ENCODE measurements at regions of chr7 and their contacts with region 1.

Region 1: DNA sequence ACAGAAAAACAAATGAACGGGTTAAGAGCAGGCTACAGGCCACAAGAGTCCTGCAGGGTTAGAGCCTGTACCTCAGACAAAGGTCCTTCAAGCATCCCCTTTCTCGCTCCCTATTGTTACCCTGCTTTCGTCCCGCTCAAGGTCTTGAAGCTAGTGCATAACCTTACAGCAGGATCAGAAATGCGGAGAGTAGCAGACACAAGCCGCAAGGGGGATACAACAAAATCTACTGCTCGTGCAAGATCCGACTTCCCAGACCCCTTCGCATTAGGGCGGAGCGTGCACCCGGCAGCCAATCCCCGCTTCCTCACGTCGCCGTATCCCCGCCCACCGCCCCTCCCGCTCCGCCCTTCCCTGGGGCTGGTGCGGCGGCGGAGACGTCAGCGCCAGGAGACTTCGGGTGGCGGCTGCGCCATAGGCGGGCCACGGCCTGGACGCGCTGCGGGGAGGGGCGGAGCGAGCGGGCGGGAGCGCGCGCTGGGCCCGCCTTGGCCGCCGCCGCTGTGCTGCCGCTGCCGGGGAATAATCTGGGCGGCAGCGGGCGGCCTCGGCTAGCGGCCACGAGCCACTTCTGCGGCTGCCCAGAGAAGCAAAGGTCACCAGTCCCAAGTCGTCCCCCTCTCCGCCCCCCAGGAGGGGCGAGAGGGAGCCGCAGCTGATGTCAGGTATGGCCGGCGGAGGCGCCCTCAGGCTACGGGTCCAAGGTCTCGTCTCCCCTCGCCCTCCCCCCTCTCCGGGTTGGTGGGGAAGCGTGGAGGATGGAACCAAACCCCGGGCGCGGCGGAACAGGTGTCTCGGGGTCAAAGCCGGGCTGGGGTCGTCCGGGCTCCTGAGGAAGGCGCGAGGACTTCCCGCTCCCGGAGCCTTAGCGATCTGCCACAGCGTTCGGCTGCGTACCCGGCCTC is at the start of gene C1GALT1:
- DNase-seq: peak; percentile 97 to 100 (median 98)
- ATAC-seq: peak; percentile 84
- H3K4me3 ChIP-seq: peak within 1 kb of the TSS; percentile 95
- H3K4me3 Mint-ChIP-seq: peak within 1 kb of the TSS; percentile 94
- H3K27ac ChIP-seq: peak within 1 kb of the TSS; percentile 89 to 91
- H3K27ac Mint-ChIP-seq: no peak within 1 kb of the TSS
- H3K4me1 ChIP-seq: peaks cover 28% of the 10 kb centered on the region
- H3K4me1 Mint-ChIP-seq: peaks cover 8% of the 10 kb centered on the region
- H3K27me3 ChIP-seq: no peaks in the 10 kb centered on the region
- H3K27me3 Mint-ChIP-seq: no peaks in the 10 kb centered on the region
- CTCF ChIP-seq: peak; percentile 48
- total RNA-seq, gene C1GALT1: 49.4 to 51.9 TPM

Region 2: DNA sequence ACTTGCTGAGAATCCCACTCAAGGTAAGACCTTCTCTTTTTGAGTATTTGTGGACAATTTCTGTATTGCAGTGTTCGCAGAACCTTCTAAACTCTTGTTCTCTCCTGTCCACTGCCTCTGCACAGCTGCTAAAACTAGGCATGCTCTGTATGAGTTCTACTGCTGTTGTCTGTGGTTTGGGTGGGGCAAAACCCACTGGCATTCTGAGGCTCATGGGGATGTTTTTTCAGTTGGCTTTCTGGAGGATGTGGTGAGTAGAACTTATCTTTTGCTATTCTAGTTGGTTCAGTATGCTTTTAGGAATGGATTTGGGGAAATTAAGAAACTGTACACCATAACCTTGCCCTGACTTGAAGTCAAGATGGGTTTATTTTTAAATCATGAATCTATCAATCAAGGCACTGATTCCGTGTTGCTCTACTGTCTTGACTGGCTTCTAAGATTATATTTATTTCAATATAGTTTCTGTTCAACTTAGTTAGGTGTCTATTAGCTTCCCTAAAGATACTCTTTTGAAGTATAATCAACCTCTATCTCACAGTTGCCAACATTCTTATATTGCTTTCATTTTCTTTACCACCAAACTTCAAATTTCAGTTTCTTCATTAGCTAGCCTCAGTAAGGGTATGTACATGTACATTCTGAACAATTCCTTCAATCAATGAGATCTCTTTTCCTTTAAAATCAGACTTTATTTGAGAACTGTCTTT is 25.1 kb before region 1 on chr7:
- CTCF ChIA-PET with region 1: interaction called, 15 read pairs
- POLR2A ChIA-PET with region 1: interaction called, 119 read pairs
- intact Hi-C with region 1: loop called (anchors 1 to 5 kb)
- DNase-seq: peak; percentile 31 to 92 (median 54)
- ATAC-seq: peak; percentile 96
- H3K4me3 ChIP-seq: peak overlapping the region; percentile 35
- H3K4me3 Mint-ChIP-seq: peak overlapping the region; percentile 64
- H3K27ac ChIP-seq: peak overlapping the region; percentile 50 to 72
- H3K27ac Mint-ChIP-seq: peak overlapping the region; percentile 85
- H3K4me1 ChIP-seq: peaks cover 24% of the 10 kb centered on the region
- H3K4me1 Mint-ChIP-seq: peaks cover 71% of the 10 kb centered on the region
- H3K27me3 ChIP-seq: no peaks in the 10 kb centered on the region
- H3K27me3 Mint-ChIP-seq: no peaks in the 10 kb centered on the region
- CTCF ChIP-seq: no peak

Region 3: DNA sequence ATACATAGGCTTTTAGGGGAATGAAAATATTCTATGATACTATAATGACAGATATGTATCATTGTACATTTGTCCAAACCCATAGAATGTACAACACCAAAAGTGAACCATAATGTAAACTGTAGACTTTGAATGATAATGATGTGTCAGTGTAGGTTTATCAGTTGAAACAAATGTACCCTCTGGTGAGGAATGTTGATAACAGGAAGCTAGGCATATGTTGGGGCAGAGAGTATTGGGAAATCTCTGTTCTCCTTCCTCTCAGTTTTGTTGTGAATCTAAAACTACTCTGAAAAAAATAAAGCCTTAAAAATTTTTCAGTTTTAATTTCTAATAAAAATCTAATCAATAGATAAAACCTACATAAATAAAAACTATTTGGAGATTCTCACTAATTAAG is 36.8 kb after region 1 on chr7:
- CTCF ChIA-PET with region 1: no interaction called
- POLR2A ChIA-PET with region 1: interaction called, 5 read pairs
- intact Hi-C with region 1: loop called in 1 of 2 experiments (anchors 5 kb)
- DNase-seq: no peak
- ATAC-seq: no peak
- H3K4me3 ChIP-seq: no peak overlapping the region
- H3K4me3 Mint-ChIP-seq: no peak overlapping the region
- H3K27ac ChIP-seq: no peak overlapping the region
- H3K27ac Mint-ChIP-seq: no peak overlapping the region
- H3K4me1 ChIP-seq: no peaks in the 10 kb centered on the region
- H3K4me1 Mint-ChIP-seq: peaks cover 34% of the 10 kb centered on the region
- H3K27me3 ChIP-seq: no peaks in the 10 kb centered on the region
- H3K27me3 Mint-ChIP-seq: no peaks in the 10 kb centered on the region
- CTCF ChIP-seq: no peak

Region 4: DNA sequence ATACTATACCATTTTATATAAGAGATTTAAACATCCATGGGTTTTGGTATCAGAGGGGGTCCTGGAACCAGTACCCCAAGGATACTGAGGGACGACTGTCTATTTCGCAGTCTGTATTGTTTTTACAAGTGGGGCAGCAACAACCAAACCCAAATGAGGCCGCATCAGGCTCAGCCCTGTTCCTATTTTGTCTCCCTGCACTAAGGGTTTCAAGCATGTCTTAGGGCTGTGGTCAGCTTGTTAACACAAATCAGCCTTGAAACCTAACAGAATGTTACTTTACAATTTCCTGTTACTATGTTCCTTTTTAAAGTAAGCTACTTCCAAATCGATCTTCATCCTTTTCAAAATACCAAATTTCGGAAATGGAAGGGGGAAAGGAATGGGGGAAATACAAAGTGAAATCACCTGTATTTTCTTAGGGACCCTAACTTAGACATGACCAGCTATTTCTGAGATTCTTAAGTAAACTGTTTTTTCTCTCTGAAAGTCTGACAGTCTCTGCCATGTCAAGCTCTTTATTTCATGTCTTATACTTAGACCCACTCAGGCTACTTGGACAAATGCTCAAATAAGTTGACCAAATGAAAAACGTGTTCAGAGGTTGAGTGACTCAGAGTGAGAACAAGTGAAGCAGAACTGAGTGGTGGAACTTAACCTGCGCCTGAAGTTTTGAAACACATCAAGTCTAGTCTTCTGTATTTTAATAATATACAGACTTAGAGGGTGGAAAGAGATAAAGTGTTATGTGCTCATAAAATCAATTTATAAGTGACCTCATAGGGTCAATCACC is 75.7 kb after region 1 on chr7:
- CTCF ChIA-PET with region 1: interaction called, 5 read pairs
- POLR2A ChIA-PET with region 1: interaction called, 29 read pairs
- intact Hi-C with region 1: loop called in 1 of 2 experiments (anchors 2 kb)
- DNase-seq: peak in 3 of 14 experiments; percentile 41 to 50 (median 47)
- ATAC-seq: peak; percentile 42
- H3K4me3 ChIP-seq: peak overlapping the region; percentile 49
- H3K4me3 Mint-ChIP-seq: peak overlapping the region; percentile 78
- H3K27ac ChIP-seq: peak overlapping the region; percentile 24 to 78
- H3K27ac Mint-ChIP-seq: peak overlapping the region; percentile 76
- H3K4me1 ChIP-seq: peaks cover 18% of the 10 kb centered on the region
- H3K4me1 Mint-ChIP-seq: peaks cover 44% of the 10 kb centered on the region
- H3K27me3 ChIP-seq: no peaks in the 10 kb centered on the region
- H3K27me3 Mint-ChIP-seq: no peaks in the 10 kb centered on the region
- CTCF ChIP-seq: no peak

Region 5: DNA sequence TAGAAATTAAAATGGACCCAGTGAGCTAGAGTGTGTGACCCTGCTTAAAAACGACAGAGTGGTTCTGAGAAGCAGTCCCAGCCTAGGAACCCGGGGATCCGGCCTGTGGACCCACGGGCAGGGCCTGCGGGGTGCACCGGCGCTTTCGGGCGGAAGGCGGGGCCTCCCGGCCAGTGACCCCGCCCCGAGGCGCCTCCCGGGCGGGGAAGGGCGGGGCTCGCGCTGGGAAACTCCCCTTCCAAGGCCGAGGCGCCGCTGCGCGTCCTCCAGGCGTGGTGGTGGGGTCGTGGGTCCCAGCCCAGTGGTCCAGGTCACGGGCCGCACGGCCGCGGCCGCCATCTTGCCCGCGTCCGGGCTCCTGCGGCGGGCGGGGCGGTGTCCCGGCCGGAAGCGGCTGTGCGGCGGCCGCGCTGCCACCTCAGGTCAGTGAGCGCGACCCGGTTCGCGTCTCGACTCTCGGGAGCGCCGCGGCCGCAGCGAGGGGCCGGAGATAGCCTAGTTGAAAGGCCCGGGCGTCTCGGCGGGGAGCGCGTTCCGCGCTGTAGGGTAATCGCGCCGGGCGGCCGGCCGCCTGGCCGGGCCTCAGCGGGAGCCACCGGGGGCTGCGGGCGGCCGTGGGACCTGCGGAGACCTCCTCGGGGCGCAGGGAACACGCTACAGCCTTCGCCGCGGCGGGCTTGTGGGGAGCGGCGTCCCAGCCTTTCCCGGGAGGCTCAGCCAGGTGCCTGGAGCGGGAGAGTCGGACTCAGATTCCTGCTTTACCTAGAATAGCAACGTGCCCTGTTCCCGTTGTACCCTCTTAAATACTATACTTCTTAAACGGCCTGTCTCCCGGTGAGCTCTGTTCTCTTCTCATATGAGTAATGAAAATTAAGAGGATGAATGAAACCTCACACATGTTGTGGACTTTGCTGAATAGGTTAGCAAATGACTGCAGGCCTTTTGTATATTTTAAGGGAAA is 384.5 kb after region 1 on chr7 and contains the start of gene MIOS:
- CTCF ChIA-PET with region 1: interaction called, 4 read pairs
- POLR2A ChIA-PET with region 1: interaction called, 7 read pairs
- intact Hi-C with region 1: loop called in 1 of 2 experiments (anchors 10 kb)
- DNase-seq: peak; percentile 65 to 92 (median 77)
- ATAC-seq: peak; percentile 92
- H3K4me3 ChIP-seq: peak within 1 kb of the TSS; percentile 74
- H3K4me3 Mint-ChIP-seq: peak within 1 kb of the TSS; percentile 89
- H3K27ac ChIP-seq: peak within 1 kb of the TSS; percentile 71 to 75
- H3K27ac Mint-ChIP-seq: peak within 1 kb of the TSS; percentile 87
- H3K4me1 ChIP-seq: peaks cover 29% of the 10 kb centered on the region
- H3K4me1 Mint-ChIP-seq: peaks cover 38% of the 10 kb centered on the region
- H3K27me3 ChIP-seq: no peaks in the 10 kb centered on the region
- H3K27me3 Mint-ChIP-seq: no peaks in the 10 kb centered on the region
- CTCF ChIP-seq: no peak
- total RNA-seq, gene MIOS: 30.8 to 33.3 TPM